ENCODE measurements at regions of chr13 and their contacts with region 1.

Region 1: DNA sequence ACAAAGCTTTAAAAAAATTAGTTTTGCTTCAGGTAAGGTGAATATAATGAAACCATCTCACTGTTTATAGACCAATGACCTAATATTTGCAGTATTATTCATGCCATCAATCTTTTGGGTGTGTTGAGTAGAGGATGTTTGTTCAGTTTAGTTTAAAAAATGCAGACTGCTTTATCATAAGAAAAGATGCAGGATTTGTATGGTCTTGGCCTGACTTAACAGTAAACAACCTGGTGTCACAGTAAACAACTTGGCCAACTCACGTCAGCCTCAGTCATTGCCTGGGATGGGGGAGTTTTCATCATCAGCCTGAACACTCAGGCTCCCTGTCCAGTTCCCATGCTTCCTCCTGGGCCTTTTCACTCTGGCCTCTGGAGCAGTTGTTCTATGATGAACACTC is 55.1 kb downstream of the LMO7 start:
- DNase-seq: no peak

Region 2: DNA sequence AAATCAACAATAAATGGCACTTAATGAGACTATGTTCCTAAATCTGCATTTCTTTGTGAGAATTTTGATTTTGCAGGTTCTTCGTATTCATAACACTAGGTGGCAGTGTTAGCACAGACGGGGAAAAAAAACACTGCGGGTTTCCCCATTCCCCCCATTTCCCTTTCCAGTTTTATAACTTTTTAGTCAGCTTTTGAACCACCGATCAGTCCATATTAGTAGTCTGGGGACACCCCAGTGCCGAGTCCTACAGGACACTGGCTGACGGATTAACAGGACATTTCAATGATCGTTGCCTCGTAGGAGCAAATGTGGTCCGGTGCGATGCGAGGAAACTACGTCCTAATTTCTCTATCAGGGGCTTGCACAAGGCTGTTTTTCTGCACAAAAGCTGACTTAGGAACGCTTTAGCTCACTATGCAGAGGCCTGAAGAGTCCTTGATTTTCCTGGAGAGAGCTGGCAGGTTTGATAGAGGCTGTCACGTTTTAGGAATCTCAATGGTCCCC is 179.3 kb after region 1 on chr13:
- intact Hi-C with region 1: loop called (anchors 5 kb)
- DNase-seq: peak in 1 of 10 donors; percentile 47

Region 3: GRCh38 chr13:76903544-76904162 is 1212.5 kb after region 1 on chr13:
- intact Hi-C with region 1: loop called (anchors 2 kb)
- DNase-seq: peak in 9 of 10 donors; percentile 19 to 93 (median 64)